Activated CD4-positive, alpha-beta T cell treated with anti-CD3 and anti-CD28 coated beads, Interleukin-2, amount 10 ng/mL, durations not matched to agents 24 days and 14 days (primary cell): ENCODE measurements at regions of chr1 and their contacts with region 1.

Region 1: DNA sequence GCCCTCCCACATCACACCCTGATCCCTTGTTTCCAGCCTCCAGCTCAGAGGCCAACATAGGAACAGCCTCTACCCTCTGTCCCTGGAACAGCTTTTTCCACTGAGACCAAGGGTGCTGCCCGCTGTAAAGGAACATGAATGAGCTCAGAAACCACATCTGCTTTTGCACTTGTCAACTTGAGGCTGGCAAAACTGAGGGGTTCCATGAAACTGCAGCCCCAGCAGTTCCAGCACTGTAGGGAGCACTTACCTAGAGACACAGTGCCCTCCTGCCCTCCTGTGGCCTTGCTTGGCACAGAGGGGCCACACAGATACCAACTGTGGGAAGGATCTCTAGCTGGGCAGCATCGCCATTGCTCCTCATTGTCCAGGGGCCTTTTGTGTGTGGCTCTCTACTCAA is 51.7 kb downstream of the ITPKB start:
- DNase-seq: no peak
- H3K4me3 Mint-ChIP-seq: peak overlapping the region; percentile 23
- H3K27ac Mint-ChIP-seq: peak overlapping the region; percentile 83
- H3K4me1 Mint-ChIP-seq: peaks cover 89% of the 10 kb centered on the region
- H3K27me3 Mint-ChIP-seq: no peaks in the 10 kb centered on the region

Region 2: DNA sequence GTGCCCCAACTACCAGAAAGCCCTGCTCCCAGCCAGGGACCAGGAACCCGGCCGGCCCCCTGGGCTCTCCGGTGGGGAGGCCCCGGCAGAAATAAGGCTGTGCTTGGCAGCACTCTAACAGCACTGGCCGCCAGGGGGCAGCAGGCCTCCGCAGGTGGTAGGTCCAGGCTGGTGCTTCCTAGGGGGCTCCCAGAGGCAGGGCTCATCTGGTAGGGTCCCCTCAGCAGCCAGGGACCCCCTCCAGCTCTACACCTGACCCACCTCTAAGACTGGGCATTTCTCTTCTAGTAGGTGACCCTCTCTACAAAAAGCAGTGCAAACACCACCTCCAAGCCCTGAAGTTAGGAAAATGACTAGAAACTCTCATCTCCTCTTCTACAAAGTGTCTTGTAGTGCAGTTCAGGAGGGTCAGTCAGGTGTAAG is 53.2 kb before region 1 on chr1:
- intact Hi-C with region 1: loop called (anchors 1 kb)
- DNase-seq: peak; percentile 93
- H3K4me3 Mint-ChIP-seq: peak overlapping the region; percentile 33
- H3K27ac Mint-ChIP-seq: peak overlapping the region; percentile 5
- H3K4me1 Mint-ChIP-seq: peaks cover 40% of the 10 kb centered on the region
- H3K27me3 Mint-ChIP-seq: no peaks in the 10 kb centered on the region

Region 3: GRCh38 chr1:226702957-226703831 is 15.8 kb after region 1 on chr1:
- intact Hi-C with region 1: loop called (anchors 1 kb)
- DNase-seq: peak; percentile 96
- H3K4me3 Mint-ChIP-seq: peak overlapping the region; percentile 86
- H3K27ac Mint-ChIP-seq: peak overlapping the region; percentile 92
- H3K4me1 Mint-ChIP-seq: peaks cover 48% of the 10 kb centered on the region
- H3K27me3 Mint-ChIP-seq: no peaks in the 10 kb centered on the region

Region 4: GRCh38 chr1:226882631-226883409 is 195.4 kb after region 1 on chr1:
- intact Hi-C with region 1: loop called (anchors 5 kb)
- DNase-seq: peak; percentile 84
- H3K4me3 Mint-ChIP-seq: peak overlapping the region; percentile 72
- H3K27ac Mint-ChIP-seq: peak overlapping the region; percentile 95
- H3K4me1 Mint-ChIP-seq: peaks cover 53% of the 10 kb centered on the region
- H3K27me3 Mint-ChIP-seq: no peaks in the 10 kb centered on the region